Tibial artery (tissue), 4 donors: ENCODE measurements at regions of chr13 and their contacts with region 1.

Region 1: DNA sequence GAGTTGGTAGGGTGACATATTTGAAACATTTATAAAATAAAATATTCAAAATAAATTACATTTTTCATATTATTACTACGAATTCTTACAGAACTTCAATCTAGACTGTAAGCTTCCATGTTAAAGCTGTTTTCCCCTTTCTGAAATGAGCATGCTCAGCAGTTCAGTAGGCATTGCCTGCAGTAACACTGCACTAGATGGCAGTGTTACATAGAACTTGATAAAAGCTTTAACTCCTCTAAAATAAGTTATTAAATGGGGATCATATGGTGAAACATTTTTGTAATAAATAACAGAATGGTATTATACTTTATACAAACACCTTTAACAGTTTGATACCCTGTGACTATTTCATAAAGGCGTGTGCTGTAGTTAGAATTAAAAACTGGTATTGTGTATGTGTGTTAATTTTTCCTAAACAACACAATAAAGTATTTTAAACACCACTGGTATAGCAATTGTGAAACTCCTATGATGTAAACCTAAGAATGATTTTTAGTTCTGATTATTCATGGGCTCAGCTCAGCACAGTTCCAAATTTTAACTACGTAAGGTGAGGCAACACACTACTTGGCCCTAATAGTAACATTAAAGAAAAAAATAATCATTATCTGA is 11.6 kb upstream of the GPR18 start:
- DNase-seq: no peak
- H3K4me3 ChIP-seq: no peak overlapping the region
- H3K27ac ChIP-seq: no peak overlapping the region
- H3K4me1 ChIP-seq: no peaks in the 10 kb centered on the region
- H3K27me3 ChIP-seq: no peaks in the 10 kb centered on the region
- CTCF ChIP-seq: peak; percentile 63 to 64

Region 2: GRCh38 chr13:99045396-99045795 is 224.3 kb before region 1 on chr13:
- intact Hi-C with region 1: no loop called
- DNase-seq: no peak
- H3K4me3 ChIP-seq: no peak overlapping the region
- H3K27ac ChIP-seq: no peak overlapping the region
- H3K4me1 ChIP-seq: peaks cover 0 to 19% (median 3%) of the 10 kb centered on the region in 4 donors
- H3K27me3 ChIP-seq: no peaks in the 10 kb centered on the region
- CTCF ChIP-seq: no peak

Region 3: DNA sequence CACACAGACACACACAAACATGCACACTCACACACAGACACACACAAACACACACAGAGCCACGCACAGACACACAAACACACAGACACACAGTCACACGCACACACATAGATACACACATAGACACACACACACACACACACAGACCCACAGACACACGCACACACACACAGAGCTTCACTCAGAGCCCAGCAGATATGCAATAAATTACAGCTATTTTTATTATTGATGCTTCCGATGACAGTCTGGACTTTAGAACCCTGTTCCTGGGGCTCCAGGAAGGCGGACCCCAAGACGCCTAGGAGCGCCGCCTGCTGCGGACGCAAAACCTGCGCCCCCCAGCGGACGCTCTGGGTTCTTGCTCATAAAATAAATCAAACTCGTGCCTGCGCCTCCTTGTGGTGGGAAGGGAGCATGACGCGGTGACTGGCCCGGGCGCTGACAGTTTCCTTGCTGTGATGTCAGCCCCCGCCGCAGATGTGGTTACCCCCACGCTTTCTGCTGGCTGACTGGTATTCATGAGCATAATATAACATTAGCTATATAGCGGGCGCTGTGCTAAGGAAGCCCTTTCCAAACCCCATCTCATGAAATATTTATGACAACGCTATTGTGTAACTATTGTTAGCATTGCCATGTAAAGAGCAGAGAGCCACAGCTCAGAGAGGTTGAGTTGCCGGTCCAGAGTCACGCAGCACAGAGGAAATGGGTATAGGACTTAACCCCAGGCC is 167.1 kb after region 1 on chr13:
- intact Hi-C with region 1: loop called (anchors 2 kb)
- DNase-seq: peak; percentile 78 to 86
- H3K4me3 ChIP-seq: no peak overlapping the region
- H3K27ac ChIP-seq: no peak overlapping the region
- H3K4me1 ChIP-seq: peaks cover 0 to 15% (median 5%) of the 10 kb centered on the region in 4 donors
- H3K27me3 ChIP-seq: peaks cover 0 to 25% of the 10 kb centered on the region in 2 donors
- CTCF ChIP-seq: peak; percentile 99 to 100